MCF 10A (cell line): ENCODE measurements at regions of chr1 and their contacts with region 1.

Region 1: GRCh38 chr1:48202030-48202752 is 20.3 kb upstream of the SLC5A9 start:
- DNase-seq: peak; percentile 85
- H3K4me3 Mint-ChIP-seq: peak overlapping the region; percentile 25
- H3K27ac Mint-ChIP-seq: peak overlapping the region; percentile 78
- H3K4me1 Mint-ChIP-seq: peaks cover 54% of the 10 kb centered on the region
- H3K27me3 Mint-ChIP-seq: no peaks in the 10 kb centered on the region
- CTCF ChIP-seq: peak; percentile 75

Region 2: GRCh38 chr1:47948126-47948525 is 254.1 kb before region 1 on chr1:
- CTCF ChIA-PET with region 1: interaction called, 4 read pairs
- POLR2A ChIA-PET with region 1: no interaction called
- intact Hi-C with region 1: loop called (anchors 1 kb)
- DNase-seq: peak; percentile 38
- H3K4me3 Mint-ChIP-seq: no peak overlapping the region
- H3K27ac Mint-ChIP-seq: no peak overlapping the region
- H3K4me1 Mint-ChIP-seq: peaks cover 6% of the 10 kb centered on the region
- H3K27me3 Mint-ChIP-seq: no peaks in the 10 kb centered on the region
- CTCF ChIP-seq: peak; percentile 12

Region 3: DNA sequence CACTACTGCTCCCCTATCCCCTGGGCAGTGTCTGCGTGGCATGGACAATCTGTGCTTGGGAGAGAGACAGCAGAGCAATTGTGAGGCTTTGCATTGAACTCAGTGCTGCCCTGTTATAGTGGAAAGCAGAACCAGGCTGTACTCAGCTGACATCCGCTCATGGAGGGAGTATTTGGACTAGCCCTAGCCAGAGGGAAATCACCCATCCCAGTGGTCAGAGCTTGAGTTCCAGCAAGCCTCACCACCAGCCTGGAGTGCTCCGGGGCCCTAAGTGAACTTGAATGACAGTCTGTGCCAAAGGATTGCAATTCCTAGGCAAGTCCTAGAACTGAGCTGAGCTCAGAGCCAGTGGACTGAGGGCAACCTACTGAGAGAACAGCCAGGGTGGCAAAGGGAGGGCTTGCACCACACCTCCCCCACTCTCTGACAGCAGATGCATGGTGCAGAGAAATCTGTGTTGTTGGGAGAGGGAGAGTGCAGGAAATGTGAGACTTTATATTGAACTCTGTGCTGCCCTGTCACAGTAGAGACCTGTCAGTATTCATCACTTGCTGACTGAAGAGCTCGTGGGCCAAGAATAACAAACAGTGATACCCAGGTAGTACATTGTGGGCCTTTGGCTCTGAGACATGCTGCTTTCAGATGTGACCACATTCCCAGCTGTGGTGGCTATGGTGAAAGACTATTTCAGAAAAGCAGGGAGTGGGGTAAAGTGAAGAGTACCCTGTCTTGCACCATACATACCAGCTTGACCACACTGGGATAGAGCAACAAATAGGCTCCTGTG is 87.4 kb before region 1 on chr1:
- CTCF ChIA-PET with region 1: interaction called, 198 read pairs
- POLR2A ChIA-PET with region 1: interaction called, 27 read pairs
- intact Hi-C with region 1: loop called (anchors 1 kb)
- DNase-seq: peak; percentile 82
- H3K4me3 Mint-ChIP-seq: no peak overlapping the region
- H3K27ac Mint-ChIP-seq: peak overlapping the region; percentile 93
- H3K4me1 Mint-ChIP-seq: peaks cover 45% of the 10 kb centered on the region
- H3K27me3 Mint-ChIP-seq: no peaks in the 10 kb centered on the region
- CTCF ChIP-seq: no peak

Region 4: GRCh38 chr1:48177257-48177656 is 24.9 kb before region 1 on chr1:
- CTCF ChIA-PET with region 1: interaction called, 36 read pairs
- POLR2A ChIA-PET with region 1: interaction called, 26 read pairs
- intact Hi-C with region 1: loop called (anchors 1 kb)
- DNase-seq: no peak
- H3K4me3 Mint-ChIP-seq: peak overlapping the region; percentile 39
- H3K27ac Mint-ChIP-seq: peak overlapping the region; percentile 13
- H3K4me1 Mint-ChIP-seq: peaks cover 38% of the 10 kb centered on the region
- H3K27me3 Mint-ChIP-seq: no peaks in the 10 kb centered on the region
- CTCF ChIP-seq: peak; percentile 2

Region 5: GRCh38 chr1:48216941-48217340 is 14.8 kb after region 1 on chr1:
- CTCF ChIA-PET with region 1: interaction called, 20 read pairs
- POLR2A ChIA-PET with region 1: interaction called, 3 read pairs
- intact Hi-C with region 1: no loop called
- DNase-seq: no peak
- H3K4me3 Mint-ChIP-seq: no peak overlapping the region
- H3K27ac Mint-ChIP-seq: no peak overlapping the region
- H3K4me1 Mint-ChIP-seq: peaks cover 13% of the 10 kb centered on the region
- H3K27me3 Mint-ChIP-seq: no peaks in the 10 kb centered on the region
- CTCF ChIP-seq: no peak

Region 6: DNA sequence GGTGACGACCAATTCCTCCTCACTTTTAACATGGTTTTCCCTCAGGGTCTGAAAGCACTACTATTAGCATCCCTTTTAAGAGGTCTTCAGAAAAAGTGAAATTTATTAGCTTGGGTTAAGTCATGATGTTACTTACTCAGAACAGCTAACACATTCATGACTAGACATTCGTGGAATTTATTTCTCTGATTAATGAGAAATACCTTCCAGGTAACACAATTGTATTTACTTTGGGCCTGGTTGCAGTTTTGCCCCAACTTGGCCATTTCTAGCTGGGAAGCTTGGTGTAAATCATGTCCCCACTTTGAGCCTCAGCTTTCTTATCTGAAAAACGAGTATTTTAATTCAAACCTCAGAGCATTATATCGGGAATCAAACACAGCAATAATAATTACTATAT is 389.0 kb after region 1 on chr1:
- CTCF ChIA-PET with region 1: no interaction called
- POLR2A ChIA-PET with region 1: no interaction called
- intact Hi-C with region 1: no loop called
- DNase-seq: no peak
- H3K4me3 Mint-ChIP-seq: no peak overlapping the region
- H3K27ac Mint-ChIP-seq: no peak overlapping the region
- H3K4me1 Mint-ChIP-seq: no peaks in the 10 kb centered on the region
- H3K27me3 Mint-ChIP-seq: peaks cover 11% of the 10 kb centered on the region
- CTCF ChIP-seq: no peak